Activated T-helper 1 cell treated with anti-CD3 and anti-CD28 coated beads, Interleukin-12 subunit alpha, Interleukin-12 subunit beta, Interleukin-2, Interleukin-4 antibody, amounts not matched to agents 30 ng/mL and 10 ng/mL and 1 ng/mL, durations not matched to agents 14 hours and 24 hours and 36 hours (primary cell): ENCODE measurements at regions of chr16 and their contacts with region 1.

Region 1: DNA sequence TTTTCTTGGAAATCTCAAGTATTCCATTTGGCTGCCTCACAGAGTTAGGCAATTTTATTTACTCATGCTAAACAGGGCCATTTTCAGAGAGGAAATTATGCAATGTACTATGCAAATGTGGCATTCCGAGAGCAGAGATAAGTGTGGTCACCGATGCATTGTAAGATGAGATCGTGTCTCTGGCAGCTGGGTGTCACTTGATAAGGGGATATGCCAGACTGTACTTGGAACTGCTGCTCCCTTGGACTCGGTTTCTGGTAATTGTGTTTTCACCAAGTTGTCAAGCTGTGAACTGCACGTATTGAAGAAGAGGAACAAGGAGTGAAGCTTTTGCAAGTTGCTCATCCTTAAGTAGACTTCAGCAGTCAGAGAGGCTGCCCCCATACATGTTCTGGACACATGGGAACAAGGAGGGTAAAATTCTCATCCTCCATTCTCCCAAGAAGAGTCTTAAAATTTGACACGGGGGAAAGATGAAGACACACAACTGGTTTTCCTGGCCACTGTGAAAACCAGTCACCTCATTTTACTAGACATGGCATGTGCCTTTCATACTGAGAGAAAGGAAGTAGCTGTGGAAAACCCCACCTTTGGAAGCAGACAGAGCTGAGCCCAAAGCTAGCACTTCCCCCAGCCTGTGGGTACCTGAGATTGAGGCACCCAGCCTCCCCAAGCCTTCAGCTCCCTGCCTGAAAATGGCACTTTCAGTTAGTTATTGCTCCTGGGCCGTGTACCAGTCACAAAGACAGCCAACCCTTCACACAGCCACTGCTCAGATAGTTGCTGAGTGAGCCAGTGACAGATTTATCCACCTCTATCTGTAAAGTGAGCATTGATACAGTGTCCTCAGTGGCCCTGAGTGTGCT is 150.7 kb downstream of the SOCS1 start:
- DNase-seq: peak; percentile 44
- H3K4me3 Mint-ChIP-seq: peak overlapping the region; percentile 65
- H3K27ac Mint-ChIP-seq: peak overlapping the region; percentile 88
- H3K4me1 Mint-ChIP-seq: peaks cover 75% of the 10 kb centered on the region
- H3K27me3 Mint-ChIP-seq: no peaks in the 10 kb centered on the region

Region 2: DNA sequence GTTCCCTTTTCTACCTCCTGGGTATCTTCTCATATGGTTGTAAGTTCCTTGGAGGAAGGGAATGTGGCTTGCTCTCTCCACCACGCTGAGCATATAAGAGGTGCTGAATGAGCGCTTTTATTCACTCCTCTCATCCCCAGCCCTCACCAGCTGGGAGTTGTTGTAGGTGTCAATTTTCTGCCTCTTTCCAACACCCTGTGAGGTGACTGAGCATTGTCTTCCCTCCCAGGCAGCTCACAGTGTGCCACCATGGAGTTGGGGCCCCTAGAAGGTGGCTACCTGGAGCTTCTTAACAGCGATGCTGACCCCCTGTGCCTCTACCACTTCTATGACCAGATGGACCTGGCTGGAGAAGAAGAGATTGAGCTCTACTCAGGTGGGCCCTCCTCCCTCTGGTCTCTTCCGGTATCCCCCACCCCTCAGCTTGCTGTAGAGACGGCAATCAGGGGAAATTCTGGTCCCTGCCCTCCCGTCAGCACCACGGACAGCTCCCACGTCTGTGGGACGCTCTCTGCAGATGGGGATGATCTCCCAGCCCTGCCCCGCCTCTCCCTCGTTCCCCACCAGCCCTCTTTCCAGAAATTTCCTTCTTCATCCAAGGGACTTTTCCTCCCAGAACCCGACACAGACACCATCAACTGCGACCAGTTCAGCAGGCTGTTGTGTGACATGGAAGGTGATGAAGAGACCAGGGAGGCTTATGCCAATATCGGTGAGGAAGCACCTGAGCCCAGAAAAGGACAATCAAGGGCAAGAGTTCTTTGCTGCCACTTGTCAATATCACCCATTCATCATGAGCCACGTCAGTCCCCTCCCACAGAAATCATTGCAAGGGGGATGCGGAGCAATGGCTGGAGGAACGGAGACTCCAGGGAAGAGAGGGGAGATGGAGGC is 210.0 kb before region 1 on chr16:
- intact Hi-C with region 1: no loop called
- DNase-seq: no peak
- H3K4me3 Mint-ChIP-seq: no peak overlapping the region
- H3K27ac Mint-ChIP-seq: no peak overlapping the region
- H3K4me1 Mint-ChIP-seq: no peaks in the 10 kb centered on the region
- H3K27me3 Mint-ChIP-seq: peaks cover 1% of the 10 kb centered on the region

Region 3: DNA sequence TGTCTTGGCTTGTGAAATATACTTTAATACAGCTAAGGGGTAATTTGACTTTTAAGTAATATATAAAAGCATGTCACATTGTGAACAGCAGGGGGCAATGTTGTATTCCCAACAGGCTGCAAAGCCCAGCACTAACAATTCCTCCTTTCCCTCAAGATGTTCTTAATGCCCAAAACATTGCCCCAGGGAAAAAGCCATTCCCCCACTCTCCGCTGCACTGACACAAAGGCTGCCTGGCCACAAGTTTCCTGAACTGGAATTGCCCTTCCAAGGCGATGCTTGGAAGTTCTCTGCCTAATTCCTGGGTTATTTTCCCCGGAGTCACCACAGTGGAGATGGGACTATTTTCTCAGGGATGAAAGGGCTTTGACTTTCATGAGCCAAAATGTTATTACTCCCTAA is 133.7 kb before region 1 on chr16:
- intact Hi-C with region 1: loop called (anchors 1 kb)
- DNase-seq: peak; percentile 28
- H3K4me3 Mint-ChIP-seq: peak overlapping the region; percentile 41
- H3K27ac Mint-ChIP-seq: peak overlapping the region; percentile 70
- H3K4me1 Mint-ChIP-seq: peaks cover 68% of the 10 kb centered on the region
- H3K27me3 Mint-ChIP-seq: no peaks in the 10 kb centered on the region

Region 4: GRCh38 chr16:11066231-11066870 is 38.9 kb before region 1 on chr16:
- intact Hi-C with region 1: no loop called
- DNase-seq: no peak
- H3K4me3 Mint-ChIP-seq: no peak overlapping the region
- H3K27ac Mint-ChIP-seq: no peak overlapping the region
- H3K4me1 Mint-ChIP-seq: peaks cover 37% of the 10 kb centered on the region
- H3K27me3 Mint-ChIP-seq: no peaks in the 10 kb centered on the region

Region 5: GRCh38 chr16:11076259-11077018 is 28.8 kb before region 1 on chr16:
- intact Hi-C with region 1: loop called (anchors 1 kb)
- DNase-seq: peak; percentile 36
- H3K4me3 Mint-ChIP-seq: peak overlapping the region; percentile 48
- H3K27ac Mint-ChIP-seq: peak overlapping the region; percentile 90
- H3K4me1 Mint-ChIP-seq: peaks cover 94% of the 10 kb centered on the region
- H3K27me3 Mint-ChIP-seq: peaks cover 2% of the 10 kb centered on the region

Region 6: DNA sequence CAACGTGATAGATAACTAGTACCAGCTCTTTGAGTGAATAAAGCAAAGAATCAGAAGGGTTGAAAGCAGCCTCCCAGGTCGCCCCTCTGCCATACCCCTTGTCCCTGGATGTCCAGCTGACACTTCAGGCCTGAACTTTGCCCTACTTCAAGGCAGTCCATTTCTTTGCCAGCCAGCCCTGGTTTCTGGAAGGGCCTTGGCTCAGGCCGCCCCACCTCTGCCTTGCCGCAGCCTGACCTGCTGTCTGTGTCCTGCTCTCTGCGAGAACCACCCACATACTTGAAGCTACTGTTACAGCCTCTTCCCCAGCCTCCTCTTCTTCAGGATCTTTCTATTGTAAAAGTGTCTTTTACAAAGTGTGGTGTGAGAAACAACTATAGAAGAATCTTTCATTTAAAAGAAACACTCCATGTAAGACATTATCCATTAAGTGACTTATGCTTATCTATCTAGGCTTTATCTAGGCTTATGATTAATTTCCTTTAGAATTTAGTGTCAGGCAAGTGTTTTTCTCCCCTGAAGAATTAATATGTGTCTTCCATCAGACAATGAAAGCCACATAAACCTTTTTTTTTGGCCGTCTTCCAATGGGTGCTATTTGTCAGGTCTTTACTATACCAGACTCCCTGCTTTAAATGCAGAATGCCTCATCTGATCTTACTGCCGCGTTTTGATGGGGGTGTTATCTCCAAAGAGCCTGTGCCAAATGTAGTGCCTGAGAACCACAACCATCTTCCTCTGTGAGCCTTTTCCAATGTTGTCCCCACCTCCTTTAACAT is 16.8 kb after region 1 on chr16:
- intact Hi-C with region 1: no loop called
- DNase-seq: no peak
- H3K4me3 Mint-ChIP-seq: no peak overlapping the region
- H3K27ac Mint-ChIP-seq: no peak overlapping the region
- H3K4me1 Mint-ChIP-seq: peaks cover 31% of the 10 kb centered on the region
- H3K27me3 Mint-ChIP-seq: no peaks in the 10 kb centered on the region

Region 7: DNA sequence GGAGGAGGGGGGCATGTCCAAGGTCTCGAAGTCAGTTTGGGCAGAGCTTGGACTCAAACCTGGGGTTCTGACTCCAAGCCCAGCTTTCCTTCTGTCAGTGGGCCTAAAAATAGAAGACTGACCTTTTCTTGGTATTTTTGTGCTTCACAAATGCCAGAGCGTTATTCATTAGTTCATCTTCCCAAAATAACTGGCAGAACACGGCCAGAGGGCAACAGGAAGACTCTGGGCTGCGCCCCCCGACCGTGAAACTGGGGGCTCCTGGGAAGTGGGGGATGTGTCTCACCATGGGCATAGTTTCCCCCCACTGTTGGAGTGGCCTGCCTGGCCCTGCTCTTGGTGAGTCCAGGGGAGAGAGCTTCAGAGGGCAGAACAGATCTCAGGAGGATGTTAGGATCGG is 56.7 kb after region 1 on chr16:
- intact Hi-C with region 1: loop called (anchors 1 kb)
- DNase-seq: no peak
- H3K4me3 Mint-ChIP-seq: no peak overlapping the region
- H3K27ac Mint-ChIP-seq: no peak overlapping the region
- H3K4me1 Mint-ChIP-seq: peaks cover 69% of the 10 kb centered on the region
- H3K27me3 Mint-ChIP-seq: no peaks in the 10 kb centered on the region

Region 8: DNA sequence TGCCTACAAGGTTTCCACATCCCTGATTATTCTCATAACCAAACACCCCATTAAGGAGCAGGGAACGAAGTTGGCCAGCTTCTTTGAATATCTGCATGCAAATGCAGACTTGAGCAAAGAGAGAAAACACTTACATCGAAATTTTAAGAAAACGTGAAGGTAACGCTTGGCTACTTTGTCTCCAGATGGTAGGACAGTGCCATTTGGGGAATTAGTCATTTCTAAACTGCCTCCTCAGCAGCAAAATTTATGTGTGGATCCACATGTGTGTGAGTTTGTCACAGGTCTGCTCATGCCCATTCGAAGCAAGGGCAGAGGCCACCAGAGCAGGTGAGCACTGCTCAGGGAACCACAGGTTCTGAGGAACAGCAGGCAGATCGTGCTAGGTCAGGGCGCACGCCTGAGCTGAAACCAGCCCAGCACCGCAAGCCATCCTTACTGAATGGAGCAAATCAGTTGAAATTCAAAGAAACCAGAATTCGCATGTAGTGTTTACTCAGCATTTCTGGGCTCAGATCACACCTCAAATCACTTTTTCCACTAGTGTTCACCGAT is 70.6 kb after region 1 on chr16:
- intact Hi-C with region 1: loop called (anchors 2 kb)
- DNase-seq: no peak
- H3K4me3 Mint-ChIP-seq: peak overlapping the region; percentile 50
- H3K27ac Mint-ChIP-seq: peak overlapping the region; percentile 78
- H3K4me1 Mint-ChIP-seq: peaks cover 61% of the 10 kb centered on the region
- H3K27me3 Mint-ChIP-seq: peaks cover 2% of the 10 kb centered on the region

Region 9: DNA sequence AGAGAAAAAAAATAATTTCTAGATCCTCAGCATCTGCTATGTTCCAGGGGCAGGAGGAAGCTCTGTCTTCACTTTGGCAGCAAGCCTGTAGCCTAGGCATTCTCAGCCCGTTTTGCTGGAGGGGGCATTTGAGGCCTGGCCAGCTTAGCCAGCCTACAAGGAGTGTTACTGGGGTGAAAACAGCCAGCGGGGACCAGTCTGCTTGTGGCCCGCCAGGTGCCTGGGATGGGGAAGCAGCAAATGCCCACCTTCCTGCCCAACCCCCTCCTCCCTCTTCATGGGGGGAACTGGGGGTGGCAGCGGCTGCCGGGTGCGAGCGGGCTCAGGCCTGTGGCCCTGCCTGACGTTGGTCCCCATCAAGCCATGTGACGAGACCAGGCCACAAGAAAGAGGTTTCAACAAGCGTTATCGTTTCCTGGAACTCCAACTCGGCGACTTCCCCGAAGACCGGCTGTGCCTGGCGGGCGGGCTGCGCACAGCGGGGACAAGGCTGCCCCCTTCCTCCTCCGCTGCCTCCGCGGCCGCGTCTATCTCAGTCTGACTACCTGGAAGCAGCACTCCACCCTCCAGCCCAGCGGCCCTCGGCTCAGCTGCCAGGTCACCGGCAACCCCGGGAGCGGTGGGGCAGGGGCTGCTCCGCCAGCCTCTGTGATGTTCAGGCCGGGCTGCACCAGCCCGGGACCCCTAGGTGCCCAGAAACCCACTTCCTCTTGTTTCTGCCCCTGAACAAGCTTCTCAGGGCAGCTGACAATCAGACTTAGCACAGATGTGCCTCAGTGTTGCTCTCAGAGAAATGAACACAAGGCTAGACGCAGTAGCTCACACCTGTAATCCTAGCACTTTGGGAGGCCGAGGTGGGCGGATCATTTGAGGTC is 127.8 kb after region 1 on chr16:
- intact Hi-C with region 1: loop called (anchors 1 kb)
- DNase-seq: peak; percentile 91
- H3K4me3 Mint-ChIP-seq: peak overlapping the region; percentile 59
- H3K27ac Mint-ChIP-seq: peak overlapping the region; percentile 95
- H3K4me1 Mint-ChIP-seq: peaks cover 89% of the 10 kb centered on the region
- H3K27me3 Mint-ChIP-seq: no peaks in the 10 kb centered on the region